ENCODE measurements at regions of chr2 and their contacts with region 1.

Region 1: GRCh38 chr2:7146151-7146550 is 228.9 kb downstream of the RNF144A start:
- DNase-seq: no peak
- ATAC-seq: no peak
- H3K4me3 ChIP-seq: no peak overlapping the region
- H3K4me3 Mint-ChIP-seq: no peak overlapping the region
- H3K27ac ChIP-seq: no peak overlapping the region
- H3K27ac Mint-ChIP-seq: no peak overlapping the region
- H3K4me1 ChIP-seq: no peaks in the 10 kb centered on the region
- H3K4me1 Mint-ChIP-seq: no peaks in the 10 kb centered on the region
- H3K27me3 ChIP-seq: no peaks in the 10 kb centered on the region
- H3K27me3 Mint-ChIP-seq: no peaks in the 10 kb centered on the region

Region 2: DNA sequence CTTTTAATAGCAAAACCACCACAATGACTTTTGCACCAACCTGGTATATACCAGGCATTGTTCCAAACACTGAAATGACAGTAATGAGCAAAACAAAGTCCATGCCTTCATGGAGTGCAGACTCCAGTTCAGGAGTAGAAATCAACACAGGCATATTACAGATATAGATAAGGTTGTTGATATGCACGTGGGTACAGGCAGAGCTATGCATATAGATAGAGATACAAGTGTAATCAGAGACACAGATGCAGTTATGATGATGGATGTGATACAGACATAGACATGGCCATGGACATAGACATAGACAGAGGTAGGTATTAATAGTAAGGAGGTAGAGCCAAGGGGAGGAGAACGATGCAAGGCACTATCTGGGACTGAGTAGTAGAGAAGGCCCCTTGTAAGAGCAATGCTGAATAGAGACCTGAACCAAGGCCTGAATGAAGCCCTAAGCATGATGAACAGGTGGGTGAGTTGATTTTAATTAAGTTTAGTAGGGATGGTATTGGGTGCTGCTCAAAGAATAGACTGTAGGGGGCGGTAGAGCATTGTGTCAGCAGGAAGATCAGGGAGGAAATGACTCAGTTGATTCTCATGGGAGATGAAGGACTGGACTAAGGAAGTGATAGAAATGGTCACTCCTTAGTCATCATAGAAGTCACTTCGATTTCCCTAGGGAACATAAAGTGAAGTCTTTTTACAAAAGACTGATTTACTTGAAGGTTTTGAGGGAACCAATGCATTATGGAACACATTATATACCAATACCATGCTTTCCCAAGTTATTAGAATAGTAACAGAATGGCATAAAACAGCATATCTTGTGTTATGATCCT is 319.9 kb before region 1 on chr2:
- CTCF ChIA-PET with region 1: no interaction called
- POLR2A ChIA-PET with region 1: no interaction called
- DNase-seq: peak in 28 of 35 experiments; percentile 3 to 75 (median 31)
- ATAC-seq: peak; percentile 58 to 77 (median 68)
- H3K4me3 ChIP-seq: no peak overlapping the region
- H3K4me3 Mint-ChIP-seq: no peak overlapping the region
- H3K27ac ChIP-seq: no peak overlapping the region
- H3K27ac Mint-ChIP-seq: peak overlapping the region in 1 of 2 donors; percentile 54
- H3K4me1 ChIP-seq: no peaks in the 10 kb centered on the region
- H3K4me1 Mint-ChIP-seq: peaks cover 0 to 10% (median 8%) of the 10 kb centered on the region in 3 donors
- H3K27me3 ChIP-seq: peaks cover 0 to 1% of the 10 kb centered on the region in 2 experiments
- H3K27me3 Mint-ChIP-seq: no peaks in the 10 kb centered on the region

Region 3: GRCh38 chr2:7133521-7133920 is 12.6 kb before region 1 on chr2:
- CTCF ChIA-PET with region 1: interaction called in 1 of 2 experiments, 10 read pairs
- POLR2A ChIA-PET with region 1: no interaction called
- DNase-seq: no peak
- ATAC-seq: no peak
- H3K4me3 ChIP-seq: no peak overlapping the region
- H3K4me3 Mint-ChIP-seq: no peak overlapping the region
- H3K27ac ChIP-seq: no peak overlapping the region
- H3K27ac Mint-ChIP-seq: no peak overlapping the region
- H3K4me1 ChIP-seq: no peaks in the 10 kb centered on the region
- H3K4me1 Mint-ChIP-seq: peaks cover under 1 to 1% (median under 1%) of the 10 kb centered on the region in 3 donors
- H3K27me3 ChIP-seq: no peaks in the 10 kb centered on the region
- H3K27me3 Mint-ChIP-seq: no peaks in the 10 kb centered on the region

Region 4: GRCh38 chr2:7169593-7169992 is 23.4 kb after region 1 on chr2:
- CTCF ChIA-PET with region 1: no interaction called
- POLR2A ChIA-PET with region 1: no interaction called
- DNase-seq: no peak
- ATAC-seq: no peak
- H3K4me3 ChIP-seq: no peak overlapping the region
- H3K4me3 Mint-ChIP-seq: no peak overlapping the region
- H3K27ac ChIP-seq: no peak overlapping the region
- H3K27ac Mint-ChIP-seq: no peak overlapping the region
- H3K4me1 ChIP-seq: no peaks in the 10 kb centered on the region
- H3K4me1 Mint-ChIP-seq: no peaks in the 10 kb centered on the region
- H3K27me3 ChIP-seq: no peaks in the 10 kb centered on the region
- H3K27me3 Mint-ChIP-seq: peaks cover 0 to 7% of the 10 kb centered on the region in 2 donors